CD8-positive, alpha-beta memory T cell (primary cell): ENCODE measurements at regions of chr9 and their contacts with region 1.

Region 1: GRCh38 chr9:5832543-5833529 is at the start of gene ERMP1:
- DNase-seq: peak; percentile 84 to 90 (median 88)
- H3K4me3 ChIP-seq: peak within 1 kb of the TSS; percentile 69
- H3K4me3 Mint-ChIP-seq: peak within 1 kb of the TSS; percentile 91 to 99 (median 95)
- H3K27ac ChIP-seq: peak within 1 kb of the TSS; percentile 46
- H3K27ac Mint-ChIP-seq: peak within 1 kb of the TSS; percentile 64 to 96 (median 93)
- H3K4me1 ChIP-seq: peaks cover 32% of the 10 kb centered on the region
- H3K4me1 Mint-ChIP-seq: peaks cover 50 to 56% (median 53%) of the 10 kb centered on the region in 3 donors
- H3K27me3 ChIP-seq: no peaks in the 10 kb centered on the region
- H3K27me3 Mint-ChIP-seq: no peaks in the 10 kb centered on the region
- total RNA-seq, gene ERMP1: 8.6 to 10.0 TPM

Region 2: GRCh38 chr9:5364294-5365024 is 468.4 kb before region 1 on chr9:
- CTCF ChIA-PET with region 1: no interaction called
- POLR2A ChIA-PET with region 1: no interaction called
- DNase-seq: no peak
- H3K4me3 ChIP-seq: no peak overlapping the region
- H3K4me3 Mint-ChIP-seq: no peak overlapping the region
- H3K27ac ChIP-seq: no peak overlapping the region
- H3K27ac Mint-ChIP-seq: no peak overlapping the region
- H3K4me1 ChIP-seq: no peaks in the 10 kb centered on the region
- H3K4me1 Mint-ChIP-seq: peaks cover 7 to 12% (median 11%) of the 10 kb centered on the region in 3 donors
- H3K27me3 ChIP-seq: no peaks in the 10 kb centered on the region
- H3K27me3 Mint-ChIP-seq: no peaks in the 10 kb centered on the region

Region 3: GRCh38 chr9:5749306-5749705 is 83.5 kb before region 1 on chr9:
- CTCF ChIA-PET with region 1: no interaction called
- POLR2A ChIA-PET with region 1: interaction called, 10 read pairs
- DNase-seq: no peak
- H3K4me3 ChIP-seq: no peak overlapping the region
- H3K4me3 Mint-ChIP-seq: no peak overlapping the region
- H3K27ac ChIP-seq: no peak overlapping the region
- H3K27ac Mint-ChIP-seq: peak overlapping the region in 1 of 8 donors; percentile 5
- H3K4me1 ChIP-seq: no peaks in the 10 kb centered on the region
- H3K4me1 Mint-ChIP-seq: peaks cover 5 to 14% (median 14%) of the 10 kb centered on the region in 3 donors
- H3K27me3 ChIP-seq: no peaks in the 10 kb centered on the region
- H3K27me3 Mint-ChIP-seq: no peaks in the 10 kb centered on the region

Region 4: DNA sequence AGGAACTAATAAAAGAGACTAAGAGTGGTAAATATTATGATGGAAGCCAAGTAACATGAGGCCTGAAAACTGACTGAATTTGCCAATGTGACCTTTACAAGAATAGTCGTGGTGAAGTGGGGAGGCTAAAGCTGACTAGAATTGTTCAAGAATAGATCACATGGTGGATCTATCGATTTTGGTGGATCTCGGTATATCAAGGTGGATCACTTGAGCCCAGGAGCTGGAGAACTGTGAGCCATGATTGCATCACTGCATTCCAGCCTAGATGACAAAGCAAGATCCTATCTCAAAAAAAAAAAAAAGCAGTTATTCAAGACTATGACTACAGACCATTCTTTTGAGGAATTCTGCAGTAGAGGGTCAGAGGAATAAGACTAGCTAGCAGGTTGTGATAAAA is 15.0 kb before region 1 on chr9:
- CTCF ChIA-PET with region 1: interaction called, 10 read pairs
- POLR2A ChIA-PET with region 1: no interaction called
- DNase-seq: no peak
- H3K4me3 ChIP-seq: no peak overlapping the region
- H3K4me3 Mint-ChIP-seq: no peak overlapping the region
- H3K27ac ChIP-seq: no peak overlapping the region
- H3K27ac Mint-ChIP-seq: peak overlapping the region in 2 of 8 donors; percentile 28 to 43
- H3K4me1 ChIP-seq: no peaks in the 10 kb centered on the region
- H3K4me1 Mint-ChIP-seq: peaks cover 8 to 23% (median 17%) of the 10 kb centered on the region in 3 donors
- H3K27me3 ChIP-seq: no peaks in the 10 kb centered on the region
- H3K27me3 Mint-ChIP-seq: no peaks in the 10 kb centered on the region

Region 5: DNA sequence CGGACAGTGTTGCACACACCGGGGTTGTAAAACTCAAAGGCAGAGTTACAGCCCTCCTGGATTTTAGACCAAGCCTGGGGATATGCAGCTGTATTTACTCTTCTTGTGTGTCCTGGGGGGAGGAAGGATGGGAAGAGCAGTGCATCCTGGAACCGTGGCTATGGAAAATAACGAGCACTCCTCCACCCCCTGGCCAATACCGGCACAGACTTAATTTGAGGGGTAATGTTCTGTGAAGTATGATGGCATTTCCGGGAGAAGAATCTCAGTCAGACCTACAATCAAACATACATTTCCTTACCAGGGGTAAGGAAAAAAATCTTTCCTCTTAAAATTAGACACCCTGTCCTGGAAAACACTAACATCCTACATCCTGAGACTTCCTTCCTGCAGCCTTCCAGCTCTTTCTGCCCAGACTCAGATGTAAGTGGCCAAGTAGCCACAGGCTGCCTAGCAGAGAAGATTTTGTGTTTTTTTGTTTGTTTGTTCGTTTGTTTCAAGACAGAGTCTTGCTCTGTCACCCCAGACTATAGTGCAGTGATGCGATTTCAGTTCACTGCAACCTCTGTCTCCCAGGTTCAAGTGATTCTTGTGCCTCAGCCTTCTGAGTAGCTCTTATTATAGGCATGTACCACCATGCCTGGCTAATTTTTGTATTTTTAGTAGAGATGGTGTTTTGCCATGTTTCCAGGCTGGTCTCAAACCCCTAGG is 11.1 kb after region 1 on chr9:
- CTCF ChIA-PET with region 1: interaction called, 44 read pairs
- POLR2A ChIA-PET with region 1: interaction called, 18 read pairs
- DNase-seq: peak in 1 of 5 donors; percentile 16
- H3K4me3 ChIP-seq: peak overlapping the region; percentile 33
- H3K4me3 Mint-ChIP-seq: peak overlapping the region; percentile 23 to 81 (median 72)
- H3K27ac ChIP-seq: peak overlapping the region; percentile 30
- H3K27ac Mint-ChIP-seq: peak overlapping the region; percentile 78 to 95 (median 88)
- H3K4me1 ChIP-seq: peaks cover 55% of the 10 kb centered on the region
- H3K4me1 Mint-ChIP-seq: peaks cover 59 to 72% (median 60%) of the 10 kb centered on the region in 3 donors
- H3K27me3 ChIP-seq: no peaks in the 10 kb centered on the region
- H3K27me3 Mint-ChIP-seq: peaks cover 0 to 2% of the 10 kb centered on the region in 2 donors

Region 6: GRCh38 chr9:5851445-5851844 is 18.6 kb after region 1 on chr9:
- CTCF ChIA-PET with region 1: interaction called, 17 read pairs
- POLR2A ChIA-PET with region 1: interaction called, 3 read pairs
- DNase-seq: peak in 1 of 5 donors; percentile 20
- H3K4me3 ChIP-seq: no peak overlapping the region
- H3K4me3 Mint-ChIP-seq: peak overlapping the region in 6 of 7 donors; percentile 5 to 67 (median 23)
- H3K27ac ChIP-seq: no peak overlapping the region
- H3K27ac Mint-ChIP-seq: peak overlapping the region; percentile 25 to 87 (median 62)
- H3K4me1 ChIP-seq: peaks cover 19% of the 10 kb centered on the region
- H3K4me1 Mint-ChIP-seq: peaks cover 33 to 53% (median 48%) of the 10 kb centered on the region in 3 donors
- H3K27me3 ChIP-seq: no peaks in the 10 kb centered on the region
- H3K27me3 Mint-ChIP-seq: no peaks in the 10 kb centered on the region

Region 7: DNA sequence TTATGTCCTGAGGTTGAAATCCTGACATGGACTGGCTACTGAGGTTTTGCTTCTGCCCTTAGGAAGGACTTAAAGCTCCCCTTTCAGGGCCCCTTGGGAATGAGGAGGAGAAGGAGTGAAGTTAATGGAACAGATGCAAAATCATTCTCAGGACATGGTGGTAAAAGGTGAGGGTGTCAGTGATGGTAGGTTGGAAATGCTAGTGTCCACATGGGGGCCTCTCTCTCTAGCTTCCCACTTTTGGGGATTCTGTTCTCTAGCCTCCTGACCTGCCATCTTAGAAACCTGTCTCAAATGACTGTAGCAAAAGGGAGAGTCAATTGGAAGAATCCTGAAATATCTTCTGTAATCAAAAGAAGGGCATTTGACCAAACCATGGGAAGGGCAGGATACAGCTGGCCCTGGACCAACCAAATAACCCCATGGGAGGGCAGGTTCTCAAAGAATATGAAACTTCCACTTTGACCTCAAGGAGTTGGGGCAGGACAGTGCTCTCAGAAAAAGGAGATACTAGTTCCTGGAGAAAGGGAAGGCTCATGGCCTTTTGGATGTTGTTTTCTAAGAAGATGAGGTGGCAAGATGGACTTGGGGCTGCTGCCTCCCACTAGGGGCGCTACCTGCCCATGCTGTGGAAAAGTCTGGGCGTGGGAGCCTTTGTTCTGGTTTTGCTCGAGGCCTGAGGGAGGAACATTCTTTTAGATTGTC is 36.6 kb after region 1 on chr9:
- CTCF ChIA-PET with region 1: interaction called, 19 read pairs
- POLR2A ChIA-PET with region 1: no interaction called
- DNase-seq: no peak
- H3K4me3 ChIP-seq: no peak overlapping the region
- H3K4me3 Mint-ChIP-seq: no peak overlapping the region
- H3K27ac ChIP-seq: no peak overlapping the region
- H3K27ac Mint-ChIP-seq: peak overlapping the region in 2 of 8 donors; percentile 46 to 51
- H3K4me1 ChIP-seq: no peaks in the 10 kb centered on the region
- H3K4me1 Mint-ChIP-seq: peaks cover 10 to 28% (median 13%) of the 10 kb centered on the region in 3 donors
- H3K27me3 ChIP-seq: no peaks in the 10 kb centered on the region
- H3K27me3 Mint-ChIP-seq: no peaks in the 10 kb centered on the region

Region 8: GRCh38 chr9:5886114-5886939 is 53.5 kb after region 1 on chr9:
- CTCF ChIA-PET with region 1: interaction called, 29 read pairs
- POLR2A ChIA-PET with region 1: no interaction called
- DNase-seq: peak; percentile 60 to 82 (median 63)
- H3K4me3 ChIP-seq: no peak overlapping the region
- H3K4me3 Mint-ChIP-seq: no peak overlapping the region
- H3K27ac ChIP-seq: no peak overlapping the region
- H3K27ac Mint-ChIP-seq: peak overlapping the region in 3 of 8 donors; percentile 47 to 81 (median 75)
- H3K4me1 ChIP-seq: peaks cover 8% of the 10 kb centered on the region
- H3K4me1 Mint-ChIP-seq: peaks cover 7 to 8% (median 8%) of the 10 kb centered on the region in 3 donors
- H3K27me3 ChIP-seq: no peaks in the 10 kb centered on the region
- H3K27me3 Mint-ChIP-seq: no peaks in the 10 kb centered on the region